H1 (cell line): ENCODE measurements at regions of chrX and their contacts with region 1.

Region 1: GRCh38 chrX:153818571-153819383 is 11.6 kb downstream of the PDZD4 start:
- DNase-seq: peak in 1 of 2 experiments; percentile 75
- H3K4me3 ChIP-seq: peak overlapping the region; percentile 27 to 57 (median 39)
- H3K27ac ChIP-seq: peak overlapping the region; percentile 63; the same call in 1 of the 2 replicates
- H3K4me1 ChIP-seq: peaks cover 0 to 21% (median 6%) of the 10 kb centered on the region in 4 experiments; a peak in 6 of 7 replicates
- H3K27me3 ChIP-seq: no peaks in the 10 kb centered on the region
- CTCF ChIP-seq: no peak
- EP300 ChIP-seq: 0 out of 3 replicates have a peak, but pooled peaks of 1 of the 2 experiments have one; percentile 14
- POLR2A ChIP-seq: peak in 1 of 2 experiments; percentile 64; a peak in 2 of 3 replicates
- RAD21 ChIP-seq: no peak

Region 2: DNA sequence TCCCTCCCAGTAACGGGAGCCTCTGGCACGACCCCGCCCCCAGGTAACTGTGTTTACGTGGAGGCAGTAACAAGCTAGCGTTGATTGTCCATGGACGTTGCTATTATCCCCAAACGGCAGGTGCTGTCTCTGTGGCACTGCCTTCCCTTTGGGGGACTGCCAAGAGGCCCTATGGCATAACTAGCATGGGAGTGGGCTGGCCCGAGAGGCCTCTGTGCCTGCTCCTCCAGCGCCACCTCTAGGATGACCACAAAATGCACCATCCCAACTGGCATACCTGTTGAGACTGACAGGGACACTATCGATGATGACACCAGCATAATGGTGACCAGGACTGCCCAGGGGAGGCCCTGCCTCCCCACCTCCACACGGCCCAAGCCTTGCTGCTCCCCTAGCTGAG is 36.5 kb before region 1 on chrX:
- CTCF ChIA-PET with region 1: no interaction called
- POLR2A ChIA-PET with region 1: no interaction called
- DNase-seq: no peak
- H3K4me3 ChIP-seq: no peak overlapping the region
- H3K27ac ChIP-seq: no peak overlapping the region
- H3K4me1 ChIP-seq: no peaks in the 10 kb centered on the region
- H3K27me3 ChIP-seq: no peaks in the 10 kb centered on the region
- CTCF ChIP-seq: peak in 2 of 3 experiments; percentile 43 to 64; a peak in 3 of 4 replicates
- EP300 ChIP-seq: no peak
- POLR2A ChIP-seq: no peak
- RAD21 ChIP-seq: peak; percentile 55 to 61

Region 3: DNA sequence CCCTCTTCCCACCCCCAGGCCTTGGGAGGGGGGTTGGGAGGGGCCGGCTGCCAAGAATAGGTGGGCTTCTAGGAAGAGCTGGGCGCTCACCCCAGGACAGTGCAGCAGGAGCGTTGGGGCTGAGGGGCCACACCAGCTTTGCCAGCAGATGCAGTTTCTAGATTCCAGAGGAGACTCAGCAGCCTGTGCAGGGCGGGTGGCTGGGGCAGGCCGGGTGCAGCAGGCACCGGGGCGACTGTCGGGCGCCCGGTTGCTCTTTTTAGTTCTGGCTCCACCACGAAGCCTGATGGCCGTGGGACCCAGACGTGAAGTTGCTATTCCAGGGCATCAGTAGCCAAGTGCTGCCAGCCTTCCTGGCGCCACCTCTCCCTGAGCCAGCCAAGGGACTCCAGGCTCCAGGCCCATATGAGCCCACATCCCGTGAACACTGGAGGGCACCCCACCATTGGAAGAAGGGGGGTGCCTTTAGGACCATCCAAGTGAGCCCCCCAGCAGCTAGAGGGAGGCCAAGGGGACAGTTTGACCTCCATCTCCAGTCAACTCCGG is 18.5 kb before region 1 on chrX:
- CTCF ChIA-PET with region 1: interaction called, 3 read pairs
- POLR2A ChIA-PET with region 1: interaction called, 11 read pairs
- DNase-seq: no peak
- H3K4me3 ChIP-seq: no peak overlapping the region
- H3K27ac ChIP-seq: no peak overlapping the region
- H3K4me1 ChIP-seq: peaks cover 0 to 12% (median 4%) of the 10 kb centered on the region in 4 experiments; a peak in 4 of 7 replicates
- H3K27me3 ChIP-seq: no peaks in the 10 kb centered on the region
- CTCF ChIP-seq: no peak
- EP300 ChIP-seq: no peak
- POLR2A ChIP-seq: peak in 1 of 2 experiments; percentile 50; a peak in 1 of 3 replicates
- RAD21 ChIP-seq: no peak

Region 4: GRCh38 chrX:153806999-153807575 is 11.7 kb before region 1 on chrX:
- CTCF ChIA-PET with region 1: interaction called, 6 read pairs
- POLR2A ChIA-PET with region 1: interaction called, 14 read pairs
- DNase-seq: no peak
- H3K4me3 ChIP-seq: no peak overlapping the region
- H3K27ac ChIP-seq: no peak overlapping the region
- H3K4me1 ChIP-seq: peaks cover 0 to 3% (median 1%) of the 10 kb centered on the region in 4 experiments; a peak in 2 of 7 replicates
- H3K27me3 ChIP-seq: no peaks in the 10 kb centered on the region
- CTCF ChIP-seq: no peak
- EP300 ChIP-seq: no peak
- POLR2A ChIP-seq: no peak
- RAD21 ChIP-seq: no peak

Region 5: GRCh38 chrX:153828723-153829548 is 10.2 kb after region 1 on chrX:
- CTCF ChIA-PET with region 1: interaction called, 4 read pairs
- POLR2A ChIA-PET with region 1: interaction called, 23 read pairs
- DNase-seq: peak in 1 of 2 experiments; percentile 69
- H3K4me3 ChIP-seq: peak overlapping the region; percentile 52 to 78 (median 58)
- H3K27ac ChIP-seq: peak overlapping the region; percentile 29; the same call in 1 of the 2 replicates
- H3K4me1 ChIP-seq: peaks cover 6 to 22% (median 15%) of the 10 kb centered on the region in 4 experiments; a peak in 6 of 7 replicates
- H3K27me3 ChIP-seq: peaks cover 0 to 6% (median 2%) of the 10 kb centered on the region in 4 experiments; a peak in 3 of 7 replicates
- CTCF ChIP-seq: no peak
- EP300 ChIP-seq: no peak
- POLR2A ChIP-seq: no peak
- RAD21 ChIP-seq: no peak